Activated naive CD4-positive, alpha-beta T cell treated with anti-CD3 and anti-CD28 coated beads, Interleukin-2, amount 10 ng/mL, durations not matched to agents 7 days and 5 days (primary cell): ENCODE measurements at regions of chr2 and their contacts with region 1.

Region 1: GRCh38 chr2:28594289-28595108 is 98.6 kb downstream of the PLB1 start:
- DNase-seq: peak; percentile 91
- H3K4me3 Mint-ChIP-seq: peak overlapping the region; percentile 21
- H3K27ac Mint-ChIP-seq: peak overlapping the region; percentile 70
- H3K4me1 Mint-ChIP-seq: peaks cover 41% of the 10 kb centered on the region
- H3K27me3 Mint-ChIP-seq: peaks cover 6% of the 10 kb centered on the region

Region 2: GRCh38 chr2:28566521-28567041 is 27.9 kb before region 1 on chr2:
- CTCF ChIA-PET with region 1: interaction called, 30 read pairs
- DNase-seq: peak; percentile 91
- H3K4me3 Mint-ChIP-seq: peak overlapping the region; percentile 81
- H3K27ac Mint-ChIP-seq: peak overlapping the region; percentile 84
- H3K4me1 Mint-ChIP-seq: peaks cover 37% of the 10 kb centered on the region
- H3K27me3 Mint-ChIP-seq: peaks cover 21% of the 10 kb centered on the region

Region 3: GRCh38 chr2:28583899-28584553 is 10.5 kb before region 1 on chr2:
- CTCF ChIA-PET with region 1: interaction called, 13 read pairs
- DNase-seq: peak; percentile 47
- H3K4me3 Mint-ChIP-seq: no peak overlapping the region
- H3K27ac Mint-ChIP-seq: peak overlapping the region; percentile 49
- H3K4me1 Mint-ChIP-seq: peaks cover 66% of the 10 kb centered on the region
- H3K27me3 Mint-ChIP-seq: peaks cover 8% of the 10 kb centered on the region

Region 4: GRCh38 chr2:28610583-28611201 is 16.2 kb after region 1 on chr2:
- CTCF ChIA-PET with region 1: interaction called, 103 read pairs
- DNase-seq: no peak
- H3K4me3 Mint-ChIP-seq: no peak overlapping the region
- H3K27ac Mint-ChIP-seq: peak overlapping the region; percentile 52
- H3K4me1 Mint-ChIP-seq: peaks cover 33% of the 10 kb centered on the region
- H3K27me3 Mint-ChIP-seq: no peaks in the 10 kb centered on the region

Region 5: DNA sequence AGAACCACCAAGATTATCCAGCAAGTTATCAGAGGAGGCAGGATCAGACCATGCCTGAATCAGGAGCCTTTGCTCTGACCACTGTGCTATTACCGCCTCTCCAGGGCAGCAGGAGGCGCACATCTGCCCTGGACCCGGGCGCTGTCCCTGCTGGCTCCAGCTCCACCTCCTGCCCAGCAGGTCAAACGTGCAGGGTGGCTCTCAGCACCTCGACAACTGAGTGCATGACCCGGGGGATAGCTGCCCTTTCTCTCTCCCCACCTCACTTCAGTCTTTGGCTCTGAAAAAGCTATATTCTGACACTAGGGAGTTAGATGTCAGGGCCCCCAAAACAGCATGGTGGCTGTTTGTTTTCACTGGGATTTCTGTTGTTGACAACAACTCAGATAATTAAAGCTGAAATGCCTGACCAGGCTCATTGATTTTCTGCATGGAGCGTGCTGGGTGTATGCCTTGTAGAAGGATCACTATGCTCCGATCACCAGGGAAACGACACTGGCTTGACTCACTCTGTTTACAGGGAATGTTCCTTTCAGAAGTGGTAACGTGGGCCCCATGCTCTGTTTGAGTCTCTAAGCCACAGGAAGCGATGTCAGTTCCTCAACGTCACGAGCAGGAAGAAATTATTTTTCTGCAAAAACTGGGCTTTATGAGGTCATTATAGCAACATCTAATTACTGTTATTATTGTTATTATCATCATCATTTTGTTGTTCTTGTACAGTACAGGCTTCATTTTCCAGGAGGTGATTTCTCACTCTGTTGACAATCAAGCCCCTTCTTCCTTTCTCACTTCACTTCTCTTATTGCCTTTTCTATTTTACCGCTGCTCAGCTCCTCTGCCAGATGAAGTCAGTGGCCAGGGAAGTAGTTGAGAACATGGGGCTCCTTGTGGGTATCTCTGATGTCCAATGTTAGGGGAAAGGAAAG is 26.9 kb after region 1 on chr2:
- CTCF ChIA-PET with region 1: interaction called, 103 read pairs
- DNase-seq: peak; percentile 87
- H3K4me3 Mint-ChIP-seq: peak overlapping the region; percentile 37
- H3K27ac Mint-ChIP-seq: peak overlapping the region; percentile 94
- H3K4me1 Mint-ChIP-seq: peaks cover 91% of the 10 kb centered on the region
- H3K27me3 Mint-ChIP-seq: no peaks in the 10 kb centered on the region

Region 6: DNA sequence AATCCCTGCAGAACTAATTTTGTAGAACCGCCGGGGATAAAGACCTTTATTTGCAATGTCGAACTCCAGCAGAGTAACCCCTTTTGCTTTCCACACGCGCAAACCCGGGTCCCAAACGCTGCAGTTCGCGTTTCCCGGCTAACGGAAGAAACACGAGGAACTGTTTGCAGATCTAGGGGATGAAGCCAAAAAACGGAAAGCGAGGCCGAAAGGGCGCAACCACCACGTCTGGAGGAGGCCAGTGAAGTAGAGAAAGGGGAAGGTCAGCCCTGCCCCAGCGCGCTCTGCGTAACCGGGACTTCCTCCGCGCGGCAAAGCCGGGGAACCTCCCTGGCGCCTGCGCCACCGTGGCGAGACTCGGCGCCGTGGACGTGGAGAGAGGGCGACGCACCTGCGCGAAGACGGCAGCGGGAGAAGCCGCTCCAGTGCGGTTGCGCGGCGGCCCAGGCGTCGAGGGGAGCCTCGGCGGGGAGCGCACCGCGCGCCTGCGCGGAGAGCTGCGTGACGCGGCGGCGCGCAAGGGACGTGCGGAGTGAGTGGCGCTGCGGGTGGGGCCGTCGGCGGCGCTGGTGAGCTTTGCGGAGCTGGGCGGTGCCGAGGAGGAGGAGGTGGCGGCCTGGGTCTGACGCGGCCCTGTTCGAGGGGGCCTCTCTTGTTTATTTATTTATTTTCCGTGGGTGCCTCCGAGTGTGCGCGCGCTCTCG is 156.9 kb after region 1 on chr2 and contains the start of gene PPP1CB:
- CTCF ChIA-PET with region 1: interaction called, 108 read pairs
- DNase-seq: peak; percentile 96
- H3K4me3 Mint-ChIP-seq: peak within 1 kb of the TSS; percentile 87
- H3K27ac Mint-ChIP-seq: peak within 1 kb of the TSS; percentile 97
- H3K4me1 Mint-ChIP-seq: peaks cover 57% of the 10 kb centered on the region
- H3K27me3 Mint-ChIP-seq: peaks cover 3% of the 10 kb centered on the region

Region 7: GRCh38 chr2:28821295-28821958 is 226.9 kb after region 1 on chr2:
- CTCF ChIA-PET with region 1: interaction called, 20 read pairs
- DNase-seq: peak; percentile 70
- H3K4me3 Mint-ChIP-seq: no peak overlapping the region
- H3K27ac Mint-ChIP-seq: no peak overlapping the region
- H3K4me1 Mint-ChIP-seq: no peaks in the 10 kb centered on the region
- H3K27me3 Mint-ChIP-seq: peaks cover 12% of the 10 kb centered on the region